CD8-positive, alpha-beta T cell (primary cell): ENCODE measurements at regions of chr19 and their contacts with region 1.

Region 1: GRCh38 chr19:8654591-8655339 is 24.3 kb downstream of the NFILZ start:
- DNase-seq: peak; percentile 49 to 86 (median 70)
- ATAC-seq: peak; percentile 90
- H3K4me3 ChIP-seq: peak overlapping the region; percentile 15 to 38
- H3K4me3 Mint-ChIP-seq: peak overlapping the region; percentile 61
- H3K27ac ChIP-seq: no peak overlapping the region
- H3K27ac Mint-ChIP-seq: no peak overlapping the region
- H3K4me1 ChIP-seq: peaks cover 22% of the 10 kb centered on the region
- H3K4me1 Mint-ChIP-seq: peaks cover 21% of the 10 kb centered on the region
- H3K27me3 ChIP-seq: no peaks in the 10 kb centered on the region
- H3K27me3 Mint-ChIP-seq: no peaks in the 10 kb centered on the region
- CTCF ChIP-seq: peak; percentile 100

Region 2: GRCh38 chr19:7394731-7395359 is 1259.9 kb before region 1 on chr19:
- CTCF ChIA-PET with region 1: no interaction called
- POLR2A ChIA-PET with region 1: no interaction called
- intact Hi-C with region 1: no loop called
- DNase-seq: peak; percentile 79 to 97 (median 89)
- ATAC-seq: peak; percentile 90
- H3K4me3 ChIP-seq: peak overlapping the region; percentile 39 to 65
- H3K4me3 Mint-ChIP-seq: peak overlapping the region; percentile 86
- H3K27ac ChIP-seq: peak overlapping the region; percentile 12 to 72
- H3K27ac Mint-ChIP-seq: peak overlapping the region; percentile 87
- H3K4me1 ChIP-seq: peaks cover 26% of the 10 kb centered on the region
- H3K4me1 Mint-ChIP-seq: peaks cover 41% of the 10 kb centered on the region
- H3K27me3 ChIP-seq: no peaks in the 10 kb centered on the region
- H3K27me3 Mint-ChIP-seq: no peaks in the 10 kb centered on the region
- CTCF ChIP-seq: no peak

Region 3: DNA sequence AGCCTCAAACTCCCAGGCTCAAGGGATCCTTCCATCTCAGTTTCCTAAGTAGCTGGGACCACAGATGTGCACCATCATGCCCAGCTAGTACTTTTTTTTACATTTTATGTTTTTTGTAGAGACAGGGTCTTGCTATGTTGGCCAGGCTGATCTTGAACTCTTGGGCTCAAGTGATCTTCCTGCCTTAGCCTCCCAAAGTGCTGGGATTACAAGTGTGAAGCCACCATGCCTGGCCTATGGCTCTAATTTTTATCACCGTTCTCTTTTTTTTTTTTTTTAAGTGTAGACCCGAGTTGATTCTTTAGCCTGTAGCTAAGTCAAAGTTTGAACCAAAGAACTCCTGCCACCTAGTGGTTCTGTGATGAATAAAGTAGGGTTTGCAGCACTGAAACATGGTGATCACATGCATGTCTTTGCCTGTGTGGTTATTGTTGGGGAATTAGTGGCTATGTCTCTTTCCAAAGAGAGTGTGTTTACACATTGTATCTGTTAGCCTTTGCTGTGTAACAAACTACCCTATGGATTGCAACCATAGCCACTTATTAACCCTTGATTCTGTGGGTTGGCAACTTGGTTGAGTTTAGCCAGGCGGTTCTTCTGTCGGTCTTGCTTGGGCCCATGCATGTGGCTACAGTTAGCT is 12.7 kb before region 1 on chr19:
- CTCF ChIA-PET with region 1: interaction called, 19 read pairs
- POLR2A ChIA-PET with region 1: no interaction called
- intact Hi-C with region 1: no loop called
- DNase-seq: peak in 3 of 9 experiments; percentile 23 to 76 (median 67)
- ATAC-seq: peak; percentile 74
- H3K4me3 ChIP-seq: no peak overlapping the region
- H3K4me3 Mint-ChIP-seq: no peak overlapping the region
- H3K27ac ChIP-seq: no peak overlapping the region
- H3K27ac Mint-ChIP-seq: no peak overlapping the region
- H3K4me1 ChIP-seq: peaks cover 7% of the 10 kb centered on the region
- H3K4me1 Mint-ChIP-seq: peaks cover 11% of the 10 kb centered on the region
- H3K27me3 ChIP-seq: peaks cover 0 to 4% of the 10 kb centered on the region in 2 experiments
- H3K27me3 Mint-ChIP-seq: peaks cover 26% of the 10 kb centered on the region
- CTCF ChIP-seq: peak; percentile 63

Region 4: DNA sequence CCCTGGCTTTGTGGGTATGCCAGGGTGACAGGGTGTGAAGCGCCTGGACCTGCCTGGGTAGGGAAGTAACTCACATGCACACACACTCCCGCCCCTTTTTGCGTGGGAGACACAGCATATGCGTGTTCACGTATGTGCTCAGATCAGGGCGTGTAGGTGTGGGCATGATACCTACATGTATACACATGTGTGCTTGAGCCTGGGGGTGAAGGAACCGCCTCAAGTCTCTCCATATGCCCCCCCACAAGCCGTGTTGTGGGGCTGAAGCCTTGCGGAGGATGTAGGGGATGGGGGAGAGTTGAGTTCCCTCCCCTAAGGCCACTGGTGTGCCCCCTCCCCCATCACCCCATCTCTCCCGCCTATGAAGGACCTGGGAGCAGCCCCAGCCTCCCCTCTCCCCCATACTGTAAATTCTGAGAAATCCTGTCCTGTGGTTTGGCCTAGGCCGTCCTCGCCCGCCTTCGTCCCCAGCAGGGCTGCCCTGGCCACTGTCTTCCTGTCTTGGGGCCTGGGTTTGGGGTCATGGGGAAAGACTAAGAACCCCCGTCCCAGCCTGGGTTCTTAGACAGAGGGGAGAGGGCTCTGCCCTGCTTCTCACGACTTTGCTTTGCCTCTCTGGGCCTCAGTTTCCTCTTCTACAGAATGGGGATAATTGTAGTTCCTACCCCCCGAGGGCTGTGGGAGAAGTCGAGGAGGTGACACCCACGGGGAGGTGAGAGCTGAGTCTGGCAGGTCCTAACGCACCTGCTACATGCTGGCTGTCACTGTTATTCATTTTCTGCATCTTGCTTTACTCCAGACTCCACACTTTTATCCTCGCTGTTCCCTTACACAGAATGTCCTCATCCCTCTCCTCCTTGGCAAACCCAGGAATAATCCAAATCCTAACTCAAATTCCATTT is 29.5 kb after region 1 on chr19:
- CTCF ChIA-PET with region 1: interaction called, 6 read pairs
- POLR2A ChIA-PET with region 1: interaction called, 4 read pairs
- intact Hi-C with region 1: loop called in 1 of 2 experiments (anchors 1 kb)
- DNase-seq: no peak
- ATAC-seq: no peak
- H3K4me3 ChIP-seq: no peak overlapping the region
- H3K4me3 Mint-ChIP-seq: no peak overlapping the region
- H3K27ac ChIP-seq: no peak overlapping the region
- H3K27ac Mint-ChIP-seq: no peak overlapping the region
- H3K4me1 ChIP-seq: no peaks in the 10 kb centered on the region
- H3K4me1 Mint-ChIP-seq: peaks cover 2% of the 10 kb centered on the region
- H3K27me3 ChIP-seq: no peaks in the 10 kb centered on the region
- H3K27me3 Mint-ChIP-seq: peaks cover 1% of the 10 kb centered on the region
- CTCF ChIP-seq: no peak

Region 5: DNA sequence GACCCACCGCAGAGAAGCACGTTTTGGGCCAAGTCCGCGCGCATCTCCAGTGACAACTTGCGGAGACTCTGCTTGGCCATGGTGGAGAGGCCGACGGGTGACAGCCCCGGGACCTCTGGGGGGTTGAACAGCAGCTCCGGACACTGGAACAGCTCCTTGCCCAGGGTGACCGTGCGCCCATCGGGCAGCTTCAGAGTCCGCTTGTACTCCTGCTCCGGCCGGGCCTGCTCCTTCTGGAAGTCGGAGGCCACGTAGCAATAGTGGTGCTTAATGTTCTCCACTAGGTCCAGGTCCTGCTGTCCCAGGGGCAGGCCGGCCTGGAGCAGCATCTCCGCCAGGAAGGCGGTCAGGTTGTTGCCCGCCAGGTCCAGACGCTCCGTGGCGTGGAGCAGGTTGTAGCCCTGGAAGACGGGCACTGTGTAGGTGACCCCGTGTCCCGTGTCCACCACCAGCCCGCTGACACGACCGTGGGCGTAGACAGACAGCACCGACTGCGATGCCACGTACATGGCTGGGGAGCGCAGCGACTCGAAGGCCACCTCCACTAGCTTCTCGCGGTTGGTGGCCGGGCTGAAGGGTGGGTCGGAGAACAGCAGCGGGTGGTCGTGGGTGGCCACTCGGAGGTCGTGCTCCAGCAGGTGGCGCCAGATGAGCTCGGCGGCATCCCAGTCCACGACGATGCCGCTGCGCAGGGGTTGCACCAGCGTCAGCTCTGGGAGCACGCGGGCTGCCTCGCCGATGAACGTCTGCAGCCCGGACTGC is 43.1 kb after region 1 on chr19:
- CTCF ChIA-PET with region 1: interaction called, 150 read pairs
- POLR2A ChIA-PET with region 1: interaction called, 7 read pairs
- intact Hi-C with region 1: loop called (anchors 1 kb)
- DNase-seq: peak in 2 of 9 experiments; percentile 22 to 35
- ATAC-seq: no peak
- H3K4me3 ChIP-seq: no peak overlapping the region
- H3K4me3 Mint-ChIP-seq: no peak overlapping the region
- H3K27ac ChIP-seq: no peak overlapping the region
- H3K27ac Mint-ChIP-seq: no peak overlapping the region
- H3K4me1 ChIP-seq: peaks cover 25% of the 10 kb centered on the region
- H3K4me1 Mint-ChIP-seq: peaks cover 29% of the 10 kb centered on the region
- H3K27me3 ChIP-seq: no peaks in the 10 kb centered on the region
- H3K27me3 Mint-ChIP-seq: no peaks in the 10 kb centered on the region
- CTCF ChIP-seq: no peak

Region 6: GRCh38 chr19:8988204-8988603 is 333.4 kb after region 1 on chr19:
- CTCF ChIA-PET with region 1: no interaction called
- POLR2A ChIA-PET with region 1: no interaction called
- intact Hi-C with region 1: loop called (anchors 2 to 10 kb)
- DNase-seq: peak in 4 of 9 experiments; percentile 15 to 37 (median 17)
- ATAC-seq: no peak
- H3K4me3 ChIP-seq: no peak overlapping the region
- H3K4me3 Mint-ChIP-seq: no peak overlapping the region
- H3K27ac ChIP-seq: no peak overlapping the region
- H3K27ac Mint-ChIP-seq: no peak overlapping the region
- H3K4me1 ChIP-seq: no peaks in the 10 kb centered on the region
- H3K4me1 Mint-ChIP-seq: no peaks in the 10 kb centered on the region
- H3K27me3 ChIP-seq: no peaks in the 10 kb centered on the region
- H3K27me3 Mint-ChIP-seq: peaks cover 6% of the 10 kb centered on the region
- CTCF ChIP-seq: no peak

Region 7: DNA sequence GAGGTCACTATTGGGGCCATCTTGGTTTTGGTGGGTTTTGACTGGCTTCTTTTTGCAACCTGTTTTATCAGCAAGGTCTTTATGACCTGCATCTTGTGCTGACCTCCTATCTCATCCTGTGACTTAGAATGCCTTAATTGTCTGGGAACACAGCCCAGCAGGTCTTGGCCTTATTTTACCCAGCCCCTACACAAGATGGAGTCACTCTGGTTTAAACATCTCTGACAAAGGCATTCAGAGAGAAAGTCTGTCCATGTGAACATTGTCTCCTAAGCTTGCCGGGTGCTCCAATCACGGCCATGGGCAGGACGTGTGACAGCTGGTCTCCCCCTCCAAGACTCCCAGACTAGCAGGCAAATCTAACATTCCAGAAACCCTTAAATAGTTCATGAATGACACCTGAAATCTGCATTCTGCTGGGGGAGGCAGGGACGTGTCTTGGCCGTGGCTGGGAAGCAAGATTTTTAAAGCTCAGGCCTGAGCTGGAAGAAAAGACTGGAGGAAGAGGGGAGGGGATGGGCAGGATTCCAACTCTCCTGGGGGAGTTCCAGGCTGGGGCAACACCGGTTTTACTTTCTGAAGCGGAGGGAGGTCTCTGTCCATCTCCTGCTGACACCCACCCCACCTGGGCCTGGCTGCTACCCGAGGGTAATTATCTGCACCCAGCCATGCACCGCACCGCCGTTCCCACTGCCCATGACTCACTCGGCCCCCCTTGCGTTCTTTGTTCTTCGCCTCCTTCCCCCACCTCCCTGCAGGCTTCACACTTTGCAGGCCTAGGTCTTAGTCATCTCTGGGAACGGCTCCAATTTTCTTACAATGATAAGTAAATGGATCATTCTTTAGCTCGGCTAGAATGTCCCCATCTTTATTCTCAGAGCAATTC is 420.5 kb after region 1 on chr19:
- CTCF ChIA-PET with region 1: interaction called, 4 read pairs
- POLR2A ChIA-PET with region 1: no interaction called
- intact Hi-C with region 1: loop called in 1 of 2 experiments (anchors 1 kb)
- DNase-seq: peak in 2 of 9 experiments; percentile 4 to 11
- ATAC-seq: no peak
- H3K4me3 ChIP-seq: no peak overlapping the region
- H3K4me3 Mint-ChIP-seq: no peak overlapping the region
- H3K27ac ChIP-seq: no peak overlapping the region
- H3K27ac Mint-ChIP-seq: no peak overlapping the region
- H3K4me1 ChIP-seq: no peaks in the 10 kb centered on the region
- H3K4me1 Mint-ChIP-seq: peaks cover 2% of the 10 kb centered on the region
- H3K27me3 ChIP-seq: no peaks in the 10 kb centered on the region
- H3K27me3 Mint-ChIP-seq: no peaks in the 10 kb centered on the region
- CTCF ChIP-seq: no peak

Region 8: GRCh38 chr19:9342610-9343304 is 688.0 kb after region 1 on chr19:
- CTCF ChIA-PET with region 1: no interaction called
- POLR2A ChIA-PET with region 1: no interaction called
- intact Hi-C with region 1: no loop called
- DNase-seq: no peak
- ATAC-seq: no peak
- H3K4me3 ChIP-seq: peak overlapping the region in 1 of 2 experiments; percentile 11
- H3K4me3 Mint-ChIP-seq: no peak overlapping the region
- H3K27ac ChIP-seq: no peak overlapping the region
- H3K27ac Mint-ChIP-seq: no peak overlapping the region
- H3K4me1 ChIP-seq: no peaks in the 10 kb centered on the region
- H3K4me1 Mint-ChIP-seq: no peaks in the 10 kb centered on the region
- H3K27me3 ChIP-seq: no peaks in the 10 kb centered on the region
- H3K27me3 Mint-ChIP-seq: no peaks in the 10 kb centered on the region
- CTCF ChIP-seq: no peak